GM18951 (cell line): ENCODE measurements at regions of chr3 and their contacts with region 1.

Region 1: GRCh38 chr3:32992322-32992692 is 40.9 kb downstream of the CCR4 start:
- POLR2A ChIP-seq: peak; percentile 14

Region 2: DNA sequence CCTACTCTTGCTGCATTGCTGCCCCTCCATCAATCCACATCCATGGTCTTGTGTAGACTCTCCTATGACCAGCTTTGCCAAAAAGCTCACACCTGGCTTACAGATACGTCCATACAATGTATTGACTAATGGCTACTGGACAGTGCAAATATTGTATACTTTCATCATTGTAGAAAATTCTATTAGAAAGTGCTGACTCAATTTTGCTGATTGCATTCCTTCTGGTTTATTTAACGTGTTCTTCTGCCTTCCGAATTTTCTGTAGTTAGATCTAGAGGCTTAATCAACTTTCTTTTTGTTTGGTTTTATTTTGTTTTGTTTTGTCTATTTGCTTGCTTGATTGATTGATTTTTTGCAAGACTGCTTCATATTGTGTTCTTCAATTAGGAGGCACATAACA is 337.1 kb before region 1 on chr3:
- in situ Hi-C with region 1: no loop called
- POLR2A ChIP-seq: no peak

Region 3: GRCh38 chr3:33144433-33144832 is 152.1 kb after region 1 on chr3:
- in situ Hi-C with region 1: no loop called
- POLR2A ChIP-seq: no peak

Region 4: DNA sequence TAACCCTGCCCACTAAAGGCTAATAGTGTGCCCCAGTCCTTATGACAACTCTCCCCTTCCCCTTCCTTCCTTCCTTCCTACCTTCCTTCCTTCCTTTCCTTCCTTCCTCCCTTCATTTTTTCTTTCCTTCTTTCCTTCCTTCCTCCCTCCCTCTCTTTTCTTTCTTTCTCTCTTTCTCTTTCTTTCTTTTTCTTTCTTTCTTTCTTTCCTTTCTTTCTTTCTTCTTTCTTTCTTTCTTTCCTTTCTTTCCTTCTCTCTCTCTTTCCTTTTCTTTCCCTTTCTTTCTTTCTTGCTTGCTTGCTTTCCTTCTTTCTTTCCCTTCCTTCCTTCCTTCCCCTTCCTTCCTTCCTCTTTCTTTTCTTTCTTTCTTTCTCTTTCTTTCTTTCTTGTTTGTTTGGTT is 254.5 kb after region 1 on chr3:
- in situ Hi-C with region 1: no loop called
- POLR2A ChIP-seq: no peak

Region 5: DNA sequence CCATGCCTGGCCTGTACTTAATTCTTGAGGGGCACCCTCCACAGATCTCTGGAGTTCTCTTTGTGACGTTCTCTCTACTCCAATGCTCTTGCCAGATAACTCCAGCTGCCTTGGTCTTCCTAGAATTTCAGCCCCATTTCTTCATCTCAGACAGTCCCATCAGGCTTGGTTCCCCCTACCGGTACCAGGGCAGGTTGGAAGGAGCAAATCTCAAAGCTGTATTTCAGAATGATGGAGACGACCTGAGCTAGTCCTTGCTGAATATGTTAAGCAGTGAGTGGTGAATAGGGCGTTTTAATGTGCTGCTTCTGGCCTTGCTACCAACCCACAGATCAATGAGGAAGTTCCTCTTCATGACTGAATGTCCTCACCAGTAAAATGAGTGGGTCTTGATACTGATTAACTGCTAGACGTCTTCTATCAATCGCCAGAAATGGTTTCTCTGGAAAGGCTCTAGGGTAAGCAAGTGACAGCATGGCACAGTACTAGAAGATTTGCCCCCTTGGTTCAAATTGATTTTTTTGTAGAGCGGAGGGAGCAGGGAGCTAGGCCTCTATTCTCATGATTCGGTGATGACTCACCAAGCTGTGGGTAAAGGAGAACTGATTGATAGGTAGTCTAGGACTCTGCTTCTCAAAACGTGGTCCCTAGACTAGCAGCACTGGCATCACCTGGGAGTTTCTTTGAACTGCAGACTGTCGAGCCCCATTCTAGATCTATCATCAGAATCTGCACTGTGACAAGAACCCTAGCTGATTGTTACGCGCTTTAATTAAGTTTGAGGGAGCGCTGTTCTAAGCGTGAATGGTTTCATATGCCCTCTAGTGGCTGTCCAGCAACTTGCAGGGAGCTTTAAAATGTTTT is 380.1 kb after region 1 on chr3:
- in situ Hi-C with region 1: loop called (anchors 25 kb)
- POLR2A ChIP-seq: no peak

Region 6: DNA sequence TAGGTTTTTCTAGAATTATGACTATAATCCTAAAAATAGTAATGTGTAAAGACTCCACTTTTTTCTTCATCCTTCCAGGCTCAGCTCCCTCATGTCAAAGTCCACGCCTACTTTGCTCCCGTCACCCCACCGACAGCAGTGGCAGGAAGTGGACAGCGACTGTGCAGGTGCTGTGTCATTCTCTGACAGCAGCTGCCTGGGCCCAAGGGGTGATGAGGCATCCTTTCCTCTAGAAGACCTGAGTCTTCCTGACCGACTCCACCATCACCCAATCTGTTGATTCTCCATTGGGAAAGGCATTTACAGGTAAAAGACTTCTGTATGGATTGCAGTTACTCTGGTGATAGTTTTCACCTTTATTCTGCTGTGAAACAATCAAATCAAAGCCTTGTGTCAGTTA is 393.1 kb after region 1 on chr3:
- in situ Hi-C with region 1: no loop called
- POLR2A ChIP-seq: no peak